ENCODE measurements at regions of chr19 and their contacts with region 1.

Region 1: DNA sequence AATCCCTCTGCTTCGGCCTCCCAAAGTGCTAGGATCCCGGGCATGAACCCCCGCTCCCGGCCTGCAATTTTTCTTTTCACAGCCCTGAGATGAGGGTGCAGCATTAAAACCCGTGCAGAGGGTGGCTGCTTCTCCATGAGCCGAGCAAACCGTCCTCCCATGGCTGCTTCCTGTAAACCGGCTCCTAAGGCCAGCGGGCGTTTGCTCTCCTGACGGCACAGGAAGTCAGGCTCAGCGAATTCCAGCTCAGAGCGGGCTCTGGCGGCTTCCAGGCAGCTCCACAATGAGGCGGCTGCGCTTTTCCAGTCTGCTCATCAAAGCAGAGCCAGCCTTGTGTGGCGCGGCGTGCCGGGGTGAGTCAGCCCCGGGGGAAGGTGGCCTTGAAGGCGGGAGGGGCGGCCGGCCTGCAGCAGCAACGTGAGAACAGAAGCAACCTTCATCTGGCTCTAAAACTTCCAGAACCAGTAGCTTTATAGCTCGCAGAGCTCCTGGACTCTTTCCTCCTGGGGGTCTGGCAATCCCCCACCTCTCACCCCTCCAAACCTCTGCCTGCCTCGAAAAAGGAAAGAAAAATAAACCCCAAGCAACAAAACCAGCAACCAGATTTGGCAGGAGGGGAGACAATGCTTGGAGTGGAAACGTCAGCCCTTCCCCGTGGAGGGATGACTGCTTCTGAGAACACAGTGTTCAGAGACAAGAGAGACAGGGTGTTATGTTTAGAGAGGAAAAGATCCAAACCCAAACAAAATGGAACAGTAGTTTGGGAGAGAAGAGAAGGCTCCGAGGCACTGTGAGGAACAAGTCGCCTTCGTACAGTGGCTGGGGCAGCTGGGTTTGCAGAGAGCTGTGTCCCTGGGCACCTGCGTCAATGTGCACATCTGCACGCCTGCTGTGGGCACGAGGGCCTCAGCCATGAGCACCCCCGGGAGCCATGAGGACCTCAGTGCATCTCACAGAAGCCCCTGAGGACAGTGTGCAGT is 67.8 kb downstream of the GADD45B start:
- DNase-seq: peak; percentile 90 to 94 (median 93)
- H3K4me3 ChIP-seq: no peak overlapping the region
- H3K27ac ChIP-seq: peak overlapping the region; percentile 70 to 81
- H3K4me1 ChIP-seq: peaks cover 12% of the 10 kb centered on the region
- H3K27me3 ChIP-seq: no peaks in the 10 kb centered on the region
- CTCF ChIP-seq: peak in 1 of 3 donors; percentile 16
- EP300 ChIP-seq: peak; percentile 92
- POLR2A ChIP-seq: peak; percentile 27

Region 2: GRCh38 chr19:2328401-2329148 is 215.2 kb before region 1 on chr19 and contains the starts of genes LSM7 and SPPL2B:
- intact Hi-C with region 1: no loop called
- DNase-seq: peak; percentile 88 to 96 (median 93)
- H3K4me3 ChIP-seq: peak within 1 kb of the TSS; percentile 91
- H3K27ac ChIP-seq: peak within 1 kb of the TSS; percentile 36 to 39
- H3K4me1 ChIP-seq: peaks cover 11% of the 10 kb centered on the region
- H3K27me3 ChIP-seq: no peaks in the 10 kb centered on the region
- CTCF ChIP-seq: no peak
- EP300 ChIP-seq: no peak
- POLR2A ChIP-seq: peak; percentile 61
- total RNA-seq, gene LSM7: 59.4 to 159 (median 79.6) TPM
- total RNA-seq, gene SPPL2B: 33.5 to 66.6 (median 48.6) TPM

Region 3: GRCh38 chr19:2475702-2476450 is 67.9 kb before region 1 on chr19 and contains the start of gene GADD45B:
- intact Hi-C with region 1: loop called in 3 of 4 experiments (anchors 2 to 5 kb)
- DNase-seq: peak; percentile 98 to 99 (median 99)
- H3K4me3 ChIP-seq: peak within 1 kb of the TSS; percentile 86
- H3K27ac ChIP-seq: peak within 1 kb of the TSS; percentile 62 to 73
- H3K4me1 ChIP-seq: peaks cover 7% of the 10 kb centered on the region
- H3K27me3 ChIP-seq: no peaks in the 10 kb centered on the region
- CTCF ChIP-seq: peak in 1 of 3 donors; percentile 39
- EP300 ChIP-seq: peak; percentile 86
- POLR2A ChIP-seq: peak; percentile 100
- total RNA-seq, gene GADD45B: 47.0 to 414 (median 73.9) TPM

Region 4: GRCh38 chr19:2494444-2495129 is 49.2 kb before region 1 on chr19:
- intact Hi-C with region 1: loop called in 1 of 4 experiments (anchors 10 kb)
- DNase-seq: peak; percentile 65 to 82 (median 76)
- H3K4me3 ChIP-seq: peak overlapping the region; percentile 51
- H3K27ac ChIP-seq: no peak overlapping the region
- H3K4me1 ChIP-seq: peaks cover 11% of the 10 kb centered on the region
- H3K27me3 ChIP-seq: no peaks in the 10 kb centered on the region
- CTCF ChIP-seq: no peak
- EP300 ChIP-seq: no peak
- POLR2A ChIP-seq: no peak